ENCODE measurements at regions of chr17 and their contacts with region 1.

Region 1: DNA sequence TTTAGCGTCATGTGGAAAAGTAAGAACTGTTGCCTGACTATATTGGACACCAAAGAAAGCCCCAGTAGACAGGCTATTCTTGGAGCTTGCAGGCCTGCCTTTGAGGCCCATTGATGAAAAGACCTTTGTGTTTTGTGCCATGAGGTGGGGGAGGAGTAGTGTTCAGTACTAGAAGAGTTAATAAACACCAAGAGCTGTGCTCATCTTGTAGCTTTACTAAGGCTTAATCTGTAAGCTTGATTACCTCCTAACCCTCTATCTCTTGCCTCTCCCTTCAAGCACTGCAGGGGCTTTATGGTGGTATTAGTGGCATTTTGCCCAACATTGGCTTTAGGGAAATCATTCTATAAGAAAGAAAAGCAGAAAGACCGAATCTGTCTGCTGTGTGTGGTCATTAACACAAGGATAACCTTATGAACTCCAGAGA is 220.2 kb upstream of the TBX2 start:
- DNase-seq: no peak
- ATAC-seq: no peak
- H3K4me3 ChIP-seq: no peak overlapping the region
- H3K27ac ChIP-seq: peak overlapping the region; percentile 25; the same call in 1 of the 2 replicates
- H3K4me1 ChIP-seq: no peaks in the 10 kb centered on the region
- H3K27me3 ChIP-seq: no peaks in the 10 kb centered on the region
- CTCF ChIP-seq: no peak

Region 2: GRCh38 chr17:60901806-60902205 is 277.6 kb before region 1 on chr17:
- CTCF ChIA-PET with region 1: no interaction called
- POLR2A ChIA-PET with region 1: no interaction called
- in situ Hi-C with region 1: no loop called
- intact Hi-C with region 1: no loop called
- DNase-seq: no peak
- ATAC-seq: no peak
- H3K4me3 ChIP-seq: no peak overlapping the region
- H3K27ac ChIP-seq: no peak overlapping the region
- H3K4me1 ChIP-seq: no peaks in the 10 kb centered on the region
- H3K27me3 ChIP-seq: no peaks in the 10 kb centered on the region
- CTCF ChIP-seq: no peak

Region 3: GRCh38 chr17:61233991-61234750 is 54.8 kb after region 1 on chr17:
- CTCF ChIA-PET with region 1: no interaction called
- POLR2A ChIA-PET with region 1: interaction called, 13 read pairs
- in situ Hi-C with region 1: no loop called
- intact Hi-C with region 1: no loop called
- DNase-seq: no peak
- ATAC-seq: no peak
- H3K4me3 ChIP-seq: no peak overlapping the region
- H3K27ac ChIP-seq: peak overlapping the region; percentile 87
- H3K4me1 ChIP-seq: peaks cover 33% of the 10 kb centered on the region
- H3K27me3 ChIP-seq: no peaks in the 10 kb centered on the region
- CTCF ChIP-seq: no peak

Region 4: GRCh38 chr17:62164763-62165753 is 985.7 kb after region 1 on chr17:
- CTCF ChIA-PET with region 1: no interaction called
- POLR2A ChIA-PET with region 1: interaction called, 10 read pairs
- in situ Hi-C with region 1: no loop called
- intact Hi-C with region 1: no loop called
- DNase-seq: no peak
- ATAC-seq: no peak; the same call in 1 of the 2 replicates
- H3K4me3 ChIP-seq: no peak overlapping the region
- H3K27ac ChIP-seq: no peak overlapping the region
- H3K4me1 ChIP-seq: no peaks in the 10 kb centered on the region
- H3K27me3 ChIP-seq: no peaks in the 10 kb centered on the region
- CTCF ChIP-seq: no peak

Measured in Panc1 (cell line).